GM18951 (cell line): ENCODE measurements at regions of chr12 and their contacts with region 1.

Region 1: DNA sequence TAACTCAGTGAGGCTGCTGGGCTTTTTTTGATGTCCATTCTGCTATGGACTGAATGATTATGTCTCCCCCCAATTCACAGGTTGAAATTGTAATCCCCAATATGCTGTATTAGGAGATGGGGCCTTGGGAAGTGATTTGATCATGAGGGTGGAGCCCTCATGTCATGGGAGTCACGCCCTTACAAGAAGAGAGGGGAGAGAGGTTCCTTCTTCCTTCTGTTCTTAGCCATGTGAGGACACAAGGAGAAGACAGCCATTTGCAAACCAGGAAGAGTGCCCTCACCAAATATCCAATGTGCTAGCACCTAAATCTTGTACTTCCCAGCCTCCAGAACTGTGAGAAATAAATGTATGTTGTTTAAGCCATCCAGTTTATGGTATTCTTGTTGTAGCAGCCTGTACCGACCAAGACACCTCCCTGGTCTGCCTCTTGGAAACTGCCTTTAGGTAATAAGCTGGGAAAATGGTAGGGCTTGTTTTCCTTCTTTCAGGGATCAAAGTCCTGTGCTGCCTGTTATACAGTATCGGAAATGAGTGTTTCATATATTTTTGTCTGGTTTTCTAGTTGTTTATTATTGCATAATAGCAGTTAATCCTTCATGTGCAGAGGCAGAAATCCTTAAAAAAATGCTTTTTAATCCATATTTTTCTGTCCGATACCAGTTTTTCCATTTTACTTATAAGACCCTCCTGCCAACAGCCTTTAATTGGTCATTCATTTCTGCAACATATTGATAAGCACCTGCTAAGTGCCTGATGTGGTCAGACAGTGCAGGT is 16.3 kb downstream of the BORCS5 start:
- POLR2A ChIP-seq: no peak

Region 2: DNA sequence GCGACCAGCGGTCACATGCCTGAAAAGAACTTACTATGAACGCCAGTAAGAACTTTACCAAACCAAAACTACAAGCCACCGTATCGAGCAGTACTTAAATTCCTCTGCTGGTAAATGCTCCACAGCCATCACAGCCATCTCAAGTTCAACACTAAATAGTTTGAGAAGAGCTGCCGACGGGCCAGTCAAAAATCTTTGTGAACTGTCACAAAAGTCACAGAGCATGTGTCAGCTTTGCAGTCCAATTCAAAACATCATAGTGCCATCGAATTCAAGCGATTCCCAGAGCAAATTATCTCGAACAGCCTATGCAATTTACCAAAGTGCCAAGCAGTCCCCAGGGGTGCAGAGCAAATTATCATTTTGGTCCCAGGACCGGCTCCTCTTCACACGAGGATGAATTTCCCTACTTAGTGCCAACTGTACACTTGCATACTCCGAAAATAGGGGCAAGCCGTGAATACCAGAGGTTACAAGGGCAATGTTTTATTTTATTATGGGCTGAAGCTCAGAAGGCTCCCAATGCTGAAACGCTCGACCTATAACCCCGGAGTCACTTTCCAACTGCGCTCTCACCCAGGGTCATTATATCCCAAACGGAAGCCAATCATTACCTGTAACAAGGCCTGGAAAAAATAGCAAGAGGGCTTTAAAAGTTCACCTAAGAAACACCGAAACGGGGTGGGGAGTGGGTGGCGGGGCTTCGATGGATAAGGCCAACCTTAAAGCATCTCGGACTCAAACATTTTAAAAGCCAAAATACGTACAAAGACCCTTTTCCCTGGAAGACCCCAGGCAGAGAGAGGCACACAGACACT is 107.4 kb before region 1 on chr12:
- in situ Hi-C with region 1: no loop called
- POLR2A ChIP-seq: no peak

Region 3: DNA sequence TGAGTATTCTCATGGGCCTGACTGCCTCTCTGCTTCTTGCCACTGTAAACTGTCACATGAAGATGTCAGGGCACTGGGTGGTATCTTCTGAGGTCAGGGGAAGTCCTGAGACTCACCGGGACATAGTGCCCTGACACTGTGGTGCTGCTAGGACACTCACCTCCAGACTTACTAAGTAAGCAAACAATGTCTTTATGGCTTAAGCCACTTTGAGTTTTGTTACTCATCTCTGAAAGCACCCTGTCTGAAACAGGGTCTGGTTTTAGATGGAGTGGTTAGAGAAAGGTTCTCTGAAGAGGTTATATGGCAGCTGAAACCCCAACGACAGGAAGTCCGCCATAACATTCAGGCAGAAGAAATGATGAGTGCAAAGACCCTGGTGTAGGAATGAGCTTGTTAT is 300.2 kb after region 1 on chr12:
- in situ Hi-C with region 1: no loop called
- POLR2A ChIP-seq: no peak

Region 4: GRCh38 chr12:12696562-12697383 is 323.6 kb after region 1 on chr12:
- in situ Hi-C with region 1: loop called (anchors 5 kb)
- POLR2A ChIP-seq: peak; percentile 40